Heart left ventricle (tissue), 16 donors: ENCODE measurements at regions of chr5 and their contacts with region 1.

Region 1: GRCh38 chr5:77638763-77639671 is 504 bp upstream of the OTP start:
- DNase-seq: no peak
- ATAC-seq: no peak
- H3K4me3 ChIP-seq: peak overlapping the region in 1 of 12 donors; percentile 2
- H3K27ac ChIP-seq: no peak overlapping the region
- H3K4me1 ChIP-seq: peaks cover 0 to 51% (median 10%) of the 10 kb centered on the region in 12 donors
- H3K27me3 ChIP-seq: peaks cover 86 to 100% (median 100%) of the 10 kb centered on the region in 9 donors
- CTCF ChIP-seq: no peak
- POLR2A ChIP-seq: no peak

Region 2: DNA sequence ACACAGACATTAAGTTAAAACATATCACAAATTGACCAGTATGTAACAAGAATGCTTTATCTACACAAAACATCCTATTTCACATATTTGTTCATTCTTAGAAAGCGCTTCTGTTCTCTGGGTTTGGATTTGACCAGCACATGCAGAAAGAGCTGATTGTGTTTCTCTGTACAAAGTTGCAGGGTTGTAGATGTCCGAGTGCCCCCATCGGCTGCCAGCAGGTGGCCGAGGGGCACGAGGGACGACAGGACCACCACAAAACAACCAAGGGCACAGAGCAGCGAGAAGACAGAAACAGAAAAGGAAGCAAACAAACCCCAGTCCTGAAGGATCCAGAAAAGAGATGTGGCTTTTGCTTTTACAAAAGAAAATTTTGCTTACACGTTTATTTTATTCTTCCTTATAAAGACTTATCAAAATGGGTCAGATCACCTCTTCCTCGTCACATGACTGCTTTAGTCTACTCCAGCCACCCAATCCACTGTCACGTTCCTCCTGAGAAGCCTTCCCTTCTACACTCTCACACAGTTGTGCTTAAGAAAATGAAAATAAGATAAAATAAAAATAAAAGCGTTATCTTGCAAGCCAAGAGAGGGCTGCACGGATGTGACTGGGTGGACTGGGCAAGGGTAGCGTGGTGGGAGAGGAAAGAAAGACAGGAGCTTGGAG is 10.0 kb before region 1 on chr5:
- intact Hi-C with region 1: no loop called
- DNase-seq: no peak
- ATAC-seq: no peak
- H3K4me3 ChIP-seq: peak overlapping the region in 2 of 12 donors; percentile 4 to 58
- H3K27ac ChIP-seq: no peak overlapping the region
- H3K4me1 ChIP-seq: peaks cover 0 to 31% (median 12%) of the 10 kb centered on the region in 12 donors
- H3K27me3 ChIP-seq: peaks cover 60 to 100% (median 88%) of the 10 kb centered on the region in 9 donors
- CTCF ChIP-seq: no peak
- POLR2A ChIP-seq: no peak

Region 3: GRCh38 chr5:77669677-77670076 is 30.7 kb after region 1 on chr5:
- intact Hi-C with region 1: no loop called
- DNase-seq: no peak
- ATAC-seq: no peak
- H3K4me3 ChIP-seq: no peak overlapping the region
- H3K27ac ChIP-seq: no peak overlapping the region
- H3K4me1 ChIP-seq: no peaks in the 10 kb centered on the region
- H3K27me3 ChIP-seq: peaks cover 0 to 42% (median 5%) of the 10 kb centered on the region in 9 donors
- CTCF ChIP-seq: no peak
- POLR2A ChIP-seq: no peak

Region 4: DNA sequence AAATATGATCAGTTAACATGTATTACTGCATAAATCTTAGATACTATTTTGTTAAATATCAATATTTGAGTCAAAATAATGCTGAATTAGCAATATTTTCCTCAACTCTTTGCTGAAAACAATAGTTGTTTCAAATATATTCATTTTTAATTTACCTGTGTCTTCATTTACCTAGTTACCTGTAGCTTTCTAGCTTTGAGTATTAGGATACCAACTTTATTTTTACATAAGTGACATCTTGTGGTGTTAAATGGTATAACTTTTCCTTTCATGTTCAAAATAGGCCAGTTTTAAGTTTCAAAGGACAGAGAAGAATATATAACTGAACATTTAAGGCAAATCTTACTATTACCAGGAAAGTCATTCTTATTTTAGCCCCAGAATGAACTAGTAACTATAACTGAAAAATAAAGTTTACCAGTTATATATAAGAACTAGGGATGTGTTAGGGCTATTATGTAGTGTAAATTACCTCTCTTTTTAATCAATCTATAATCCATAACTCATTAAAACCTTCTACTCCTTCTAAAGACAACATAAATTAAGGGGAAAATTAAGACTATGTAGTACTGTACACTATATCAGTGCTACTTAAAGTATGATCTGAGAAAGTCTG is 630.2 kb after region 1 on chr5:
- intact Hi-C with region 1: loop called in 1 of 10 experiments (anchors 5 kb)
- DNase-seq: no peak
- ATAC-seq: no peak
- H3K4me3 ChIP-seq: peak overlapping the region in 1 of 12 donors; percentile 1
- H3K27ac ChIP-seq: peak overlapping the region in 1 of 12 donors; percentile 19
- H3K4me1 ChIP-seq: peaks cover 0 to 29% (median 18%) of the 10 kb centered on the region in 12 donors
- H3K27me3 ChIP-seq: no peaks in the 10 kb centered on the region
- CTCF ChIP-seq: peak; percentile 37 to 58 (median 48)
- POLR2A ChIP-seq: no peak